Activated B cell treated with CpG ODN at 0.5 μM for 24 hours (primary cell): ENCODE measurements at regions of chr3 and their contacts with region 1.

Region 1: DNA sequence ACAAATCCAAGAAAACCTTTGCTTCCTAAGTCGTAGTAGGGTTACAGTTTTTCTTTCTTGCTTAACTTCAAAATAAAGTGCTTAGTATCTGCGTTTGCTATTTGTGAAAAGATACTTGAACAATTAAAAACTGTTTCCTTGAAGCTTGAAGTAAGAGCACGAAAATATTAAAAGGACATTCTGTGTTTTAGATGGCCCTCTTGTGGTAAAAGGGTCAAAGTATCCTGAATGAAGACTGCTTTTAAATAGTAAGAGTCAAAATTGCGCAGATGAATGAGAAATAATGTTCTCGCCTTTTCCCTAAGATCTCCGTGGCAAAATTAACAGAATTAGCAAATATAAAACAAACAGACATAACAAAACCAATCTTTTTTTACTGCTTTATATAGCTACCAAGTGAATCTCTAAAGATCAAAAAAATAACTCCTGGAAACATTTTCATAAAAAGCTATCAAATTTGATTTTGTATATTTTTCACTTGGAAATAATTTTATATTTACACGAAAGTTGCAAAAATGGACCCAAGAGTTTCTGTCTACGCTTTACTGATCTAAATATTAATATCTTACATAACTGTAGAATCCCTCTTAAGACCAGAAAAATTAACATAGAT is 175.4 kb downstream of the MBNL1 start:
- DNase-seq: no peak
- ATAC-seq: peak; percentile 37
- H3K4me3 Mint-ChIP-seq: no peak overlapping the region
- H3K27ac Mint-ChIP-seq: no peak overlapping the region
- H3K4me1 Mint-ChIP-seq: peaks cover 57% of the 10 kb centered on the region
- H3K27me3 Mint-ChIP-seq: no peaks in the 10 kb centered on the region
- CTCF ChIP-seq: no peak

Region 2: DNA sequence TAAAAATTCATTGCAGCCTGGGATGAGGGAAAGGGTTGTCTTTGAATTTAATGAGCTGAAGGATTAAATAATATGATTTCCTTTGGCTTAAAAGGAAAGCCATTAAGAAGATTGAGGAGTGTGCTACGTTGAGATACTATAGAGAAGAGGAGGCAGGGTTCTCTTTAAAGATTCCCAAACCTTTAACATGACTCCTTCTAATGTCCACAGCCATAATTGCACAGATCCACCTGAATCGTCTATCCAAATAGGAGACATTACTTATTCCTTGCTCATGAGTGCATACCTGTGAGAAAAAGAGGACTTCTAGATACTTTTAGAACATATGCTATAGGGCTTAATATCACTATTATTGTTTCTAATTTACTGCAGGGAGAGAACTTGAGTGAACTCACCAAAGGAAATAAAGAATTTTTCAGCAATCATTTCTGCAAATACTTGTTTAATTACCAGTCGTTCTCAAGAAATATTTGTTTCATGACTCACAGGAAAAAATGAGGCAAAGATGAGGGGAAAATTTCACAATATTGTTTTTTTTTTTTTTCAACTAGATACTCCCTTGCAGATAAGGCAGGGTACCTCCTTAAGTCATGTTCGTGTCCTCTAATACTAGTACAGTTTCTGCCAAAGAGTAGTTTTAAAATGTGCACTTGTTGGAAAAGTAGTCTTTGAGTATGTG is 579.6 kb before region 1 on chr3:
- CTCF ChIA-PET with region 1: no interaction called
- POLR2A ChIA-PET with region 1: no interaction called
- intact Hi-C with region 1: loop called (anchors 10 kb)
- DNase-seq: no peak
- ATAC-seq: no peak
- H3K4me3 Mint-ChIP-seq: no peak overlapping the region
- H3K27ac Mint-ChIP-seq: no peak overlapping the region
- H3K4me1 Mint-ChIP-seq: no peaks in the 10 kb centered on the region
- H3K27me3 Mint-ChIP-seq: no peaks in the 10 kb centered on the region
- CTCF ChIP-seq: no peak

Region 3: GRCh38 chr3:151918253-151919029 is 525.7 kb before region 1 on chr3:
- CTCF ChIA-PET with region 1: interaction called, 3 read pairs
- POLR2A ChIA-PET with region 1: no interaction called
- intact Hi-C with region 1: loop called (anchors 2 kb)
- DNase-seq: no peak
- ATAC-seq: no peak
- H3K4me3 Mint-ChIP-seq: no peak overlapping the region
- H3K27ac Mint-ChIP-seq: no peak overlapping the region
- H3K4me1 Mint-ChIP-seq: no peaks in the 10 kb centered on the region
- H3K27me3 Mint-ChIP-seq: no peaks in the 10 kb centered on the region
- CTCF ChIP-seq: peak; percentile 18

Region 4: DNA sequence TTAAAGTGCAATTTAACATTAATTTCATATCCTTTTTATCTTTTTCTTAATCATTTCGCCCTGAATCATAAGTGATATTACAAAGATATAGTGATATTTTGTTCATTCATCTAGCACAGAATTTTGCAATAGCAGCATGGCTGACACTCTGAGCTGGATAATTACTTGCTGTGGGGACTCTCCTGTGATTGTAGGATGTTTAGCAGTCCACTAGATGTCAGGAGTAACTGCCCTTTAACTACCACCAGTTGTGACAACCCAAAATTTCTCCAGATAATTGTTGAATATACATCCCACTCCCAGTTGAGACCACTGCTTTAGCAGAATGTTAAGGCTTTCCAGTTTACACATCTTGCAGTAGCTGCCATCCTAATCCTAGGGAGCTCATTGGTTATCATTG is 372.2 kb before region 1 on chr3:
- CTCF ChIA-PET with region 1: interaction called, 14 read pairs
- POLR2A ChIA-PET with region 1: no interaction called
- intact Hi-C with region 1: loop called (anchors 1 kb)
- DNase-seq: no peak
- ATAC-seq: peak; percentile 66
- H3K4me3 Mint-ChIP-seq: no peak overlapping the region
- H3K27ac Mint-ChIP-seq: no peak overlapping the region
- H3K4me1 Mint-ChIP-seq: no peaks in the 10 kb centered on the region
- H3K27me3 Mint-ChIP-seq: no peaks in the 10 kb centered on the region
- CTCF ChIP-seq: no peak

Region 5: GRCh38 chr3:152458376-152459117 is 14.4 kb after region 1 on chr3:
- CTCF ChIA-PET with region 1: interaction called, 3 read pairs
- POLR2A ChIA-PET with region 1: no interaction called
- intact Hi-C with region 1: loop called (anchors 2 kb)
- DNase-seq: no peak
- ATAC-seq: no peak
- H3K4me3 Mint-ChIP-seq: no peak overlapping the region
- H3K27ac Mint-ChIP-seq: peak overlapping the region; percentile 18
- H3K4me1 Mint-ChIP-seq: peaks cover 20% of the 10 kb centered on the region
- H3K27me3 Mint-ChIP-seq: no peaks in the 10 kb centered on the region
- CTCF ChIP-seq: no peak

Region 6: DNA sequence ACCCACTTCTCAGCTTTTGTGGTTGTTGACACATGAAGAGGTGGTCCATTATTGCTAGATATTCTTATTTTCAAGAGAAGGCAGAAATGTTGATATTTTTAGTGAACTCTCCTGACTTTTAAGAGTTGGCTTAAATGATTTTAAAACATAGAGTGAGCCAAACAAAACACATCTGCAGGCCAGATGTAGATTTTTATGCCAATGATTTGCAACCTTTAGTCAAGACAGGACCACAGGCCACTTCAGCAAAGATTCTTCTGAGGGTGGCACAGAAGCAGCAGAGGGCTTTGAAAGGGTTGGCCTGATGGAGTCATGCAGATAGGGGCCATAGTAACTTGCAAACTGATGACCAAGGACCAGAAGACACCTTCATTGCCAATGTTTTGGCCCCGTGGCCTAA is 114.3 kb after region 1 on chr3:
- CTCF ChIA-PET with region 1: no interaction called
- POLR2A ChIA-PET with region 1: interaction called, 11 read pairs
- intact Hi-C with region 1: no loop called
- DNase-seq: no peak
- ATAC-seq: no peak
- H3K4me3 Mint-ChIP-seq: no peak overlapping the region
- H3K27ac Mint-ChIP-seq: no peak overlapping the region
- H3K4me1 Mint-ChIP-seq: no peaks in the 10 kb centered on the region
- H3K27me3 Mint-ChIP-seq: no peaks in the 10 kb centered on the region
- CTCF ChIP-seq: no peak

Region 7: DNA sequence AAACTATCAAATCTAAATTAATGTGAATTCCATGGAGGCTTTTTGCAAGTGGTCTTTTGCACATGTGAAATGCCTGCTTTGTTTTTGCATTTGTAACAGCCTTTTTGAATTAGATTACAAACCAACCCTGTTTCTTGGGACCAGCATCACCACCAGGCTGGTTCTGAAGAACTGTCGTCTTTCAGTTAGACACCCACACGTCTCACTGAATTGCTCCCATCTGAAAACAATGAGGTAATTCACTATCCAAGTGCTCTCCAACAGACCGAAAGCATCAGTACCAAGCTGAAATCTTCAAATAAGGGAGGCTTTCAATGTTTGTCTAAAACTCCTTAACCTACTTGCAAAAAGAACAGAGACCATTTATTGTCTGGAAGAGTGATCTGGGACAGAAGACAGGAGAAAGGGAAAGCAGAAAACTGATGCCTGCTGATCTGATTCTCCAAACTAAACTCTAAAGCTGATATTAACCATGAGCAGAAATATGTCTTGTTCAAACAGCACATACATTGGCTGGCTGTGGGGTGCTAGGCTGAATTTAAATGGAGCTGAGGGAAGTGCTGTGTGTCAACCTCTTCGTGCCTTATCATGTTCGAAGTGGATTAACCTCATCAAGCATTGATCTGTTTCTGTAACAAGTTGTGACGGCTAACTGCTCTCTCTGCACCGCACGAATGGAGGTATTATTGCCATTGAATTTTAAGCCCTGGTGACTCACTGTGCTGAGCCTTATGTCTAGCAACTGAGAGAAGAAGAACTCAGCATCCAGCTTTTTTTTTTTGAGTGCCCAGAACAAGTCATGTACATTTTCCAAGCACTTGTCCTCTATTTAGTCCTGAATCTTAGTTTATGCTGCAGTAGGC is 177.1 kb after region 1 on chr3:
- CTCF ChIA-PET with region 1: no interaction called
- POLR2A ChIA-PET with region 1: no interaction called
- intact Hi-C with region 1: no loop called
- DNase-seq: no peak
- ATAC-seq: no peak
- H3K4me3 Mint-ChIP-seq: no peak overlapping the region
- H3K27ac Mint-ChIP-seq: no peak overlapping the region
- H3K4me1 Mint-ChIP-seq: no peaks in the 10 kb centered on the region
- H3K27me3 Mint-ChIP-seq: peaks cover 4% of the 10 kb centered on the region
- CTCF ChIP-seq: no peak